GM10248 (cell line): ENCODE measurements at regions of chr17 and their contacts with region 1.

Region 1: GRCh38 chr17:57243171-57243948 is 13.0 kb upstream of the MSI2 start:
- DNase-seq: peak; percentile 82
- CTCF ChIP-seq: peak; percentile 100

Region 2: GRCh38 chr17:56943505-56944125 is 299.7 kb before region 1 on chr17:
- CTCF ChIA-PET with region 1: no interaction called
- POLR2A ChIA-PET with region 1: no interaction called
- DNase-seq: no peak
- CTCF ChIP-seq: no peak

Region 3: GRCh38 chr17:57255776-57256681 is 12.7 kb after region 1 on chr17 and contains the start of gene MSI2:
- CTCF ChIA-PET with region 1: interaction called, 70 read pairs
- POLR2A ChIA-PET with region 1: no interaction called
- DNase-seq: peak; percentile 84
- CTCF ChIP-seq: no peak

Region 4: DNA sequence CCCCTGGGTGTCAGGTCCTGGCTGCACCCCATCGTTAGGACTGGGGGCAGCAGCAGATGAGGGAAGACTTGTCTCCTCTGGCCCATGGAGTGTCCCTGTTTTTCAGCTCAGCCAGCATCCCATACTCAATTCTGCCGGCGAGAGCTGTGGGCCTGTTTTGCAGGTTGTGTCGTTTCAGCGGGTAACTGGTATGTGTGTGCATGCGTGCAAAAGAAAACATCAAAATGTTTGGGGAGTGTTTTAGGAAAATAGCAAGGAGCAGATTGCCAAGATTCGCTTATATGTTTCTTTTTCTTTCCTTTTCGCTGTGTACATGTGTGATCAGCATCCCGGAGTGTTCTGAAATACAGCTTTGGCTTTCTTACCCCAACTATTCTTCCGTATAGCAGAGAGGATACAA is 47.6 kb after region 1 on chr17:
- CTCF ChIA-PET with region 1: no interaction called
- POLR2A ChIA-PET with region 1: no interaction called
- DNase-seq: no peak
- CTCF ChIP-seq: no peak

Region 5: DNA sequence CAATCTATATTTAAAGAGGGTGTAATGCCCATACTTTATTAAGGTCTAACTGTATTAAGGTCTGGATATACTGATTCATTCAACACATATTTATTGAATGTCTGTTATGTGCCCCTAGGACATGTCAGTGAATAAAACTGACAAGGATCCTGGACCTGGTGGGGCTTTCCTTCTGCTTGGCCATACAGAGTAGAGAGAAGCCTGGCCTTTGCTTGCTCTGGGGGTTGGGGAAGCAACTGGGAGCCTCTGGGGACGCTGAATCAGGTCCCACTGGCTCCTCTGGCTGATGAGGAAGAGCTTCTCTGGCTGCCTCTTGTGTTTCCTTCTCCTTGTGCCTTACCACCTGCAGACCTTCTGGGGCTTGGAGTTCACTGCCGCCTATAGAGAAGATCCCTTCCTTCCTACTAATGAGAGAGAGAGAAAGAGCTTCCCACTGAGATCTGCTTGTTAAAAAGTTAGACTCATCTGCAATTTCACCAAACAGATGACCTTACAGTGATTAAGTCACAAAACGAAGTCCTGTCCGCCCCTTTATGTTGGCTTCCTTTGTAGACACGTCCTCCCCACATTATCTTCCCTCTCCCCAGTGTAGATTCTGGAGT is 62.6 kb after region 1 on chr17:
- CTCF ChIA-PET with region 1: interaction called, 10 read pairs
- POLR2A ChIA-PET with region 1: no interaction called
- DNase-seq: no peak
- CTCF ChIP-seq: no peak

Region 6: DNA sequence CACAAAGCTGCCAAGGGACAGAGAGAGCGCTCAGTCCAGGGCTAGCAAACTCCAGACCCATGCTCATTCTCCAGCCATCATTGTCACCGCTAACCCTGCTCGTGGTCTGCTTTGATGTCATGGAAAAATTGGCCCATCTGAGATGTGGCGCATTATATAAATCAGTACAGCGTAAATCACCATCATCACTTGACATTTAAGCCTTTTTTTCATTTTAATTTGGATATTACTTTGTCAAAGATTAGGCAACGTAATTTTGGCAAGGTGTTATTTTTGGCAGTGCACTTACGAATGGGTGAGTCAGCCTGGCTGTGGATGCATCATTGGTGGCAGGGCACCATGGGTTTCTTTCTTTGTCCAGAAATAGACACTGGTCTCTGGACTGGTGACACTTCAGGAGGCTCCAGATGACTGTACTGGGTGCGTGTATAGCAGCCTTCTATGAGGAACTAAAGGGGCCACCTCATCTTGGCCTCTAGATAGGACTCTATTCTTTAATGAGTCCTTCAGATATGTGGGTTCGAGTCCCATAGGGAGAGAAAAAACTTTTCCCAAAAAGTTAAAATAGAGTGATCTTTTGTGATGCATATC is 179.3 kb after region 1 on chr17:
- CTCF ChIA-PET with region 1: interaction called, 23 read pairs
- POLR2A ChIA-PET with region 1: no interaction called
- DNase-seq: peak; percentile 60
- CTCF ChIP-seq: no peak

Region 7: DNA sequence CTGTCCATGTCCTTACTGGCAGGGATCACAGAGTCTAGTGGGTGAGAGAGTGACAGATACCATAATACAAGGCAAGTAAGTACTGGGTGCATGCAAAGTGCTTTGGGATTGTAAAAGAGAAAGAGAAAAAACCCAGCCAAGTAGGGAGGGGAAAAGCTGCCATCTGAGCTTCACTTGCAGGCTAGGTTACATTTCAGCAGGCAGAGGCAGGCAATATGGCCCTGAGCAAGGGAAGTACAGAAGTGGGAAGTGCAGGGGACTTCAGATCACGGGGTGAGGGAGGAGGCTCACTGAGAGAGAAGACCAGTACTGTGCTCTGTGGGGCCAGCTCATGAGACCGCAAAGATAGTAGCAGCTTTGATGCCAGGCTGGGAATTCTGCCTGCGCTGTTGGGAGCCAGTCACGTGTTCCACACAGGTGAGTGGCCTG is 243.5 kb after region 1 on chr17:
- CTCF ChIA-PET with region 1: interaction called, 11 read pairs
- POLR2A ChIA-PET with region 1: no interaction called
- DNase-seq: no peak
- CTCF ChIP-seq: no peak

Region 8: GRCh38 chr17:57747221-57748017 is 504.1 kb after region 1 on chr17:
- CTCF ChIA-PET with region 1: interaction called, 52 read pairs
- POLR2A ChIA-PET with region 1: no interaction called
- DNase-seq: peak; percentile 68
- CTCF ChIP-seq: peak; percentile 73